Activated T-helper 1 cell treated with anti-CD3 and anti-CD28 coated beads, Interleukin-12 subunit alpha, Interleukin-12 subunit beta, Interleukin-2, Interleukin-4 antibody, amounts not matched to agents 30 ng/mL and 10 ng/mL and 1 ng/mL, durations not matched to agents 14 hours and 24 hours and 36 hours (primary cell): ENCODE measurements at regions of chr2 and their contacts with region 1.

Region 1: DNA sequence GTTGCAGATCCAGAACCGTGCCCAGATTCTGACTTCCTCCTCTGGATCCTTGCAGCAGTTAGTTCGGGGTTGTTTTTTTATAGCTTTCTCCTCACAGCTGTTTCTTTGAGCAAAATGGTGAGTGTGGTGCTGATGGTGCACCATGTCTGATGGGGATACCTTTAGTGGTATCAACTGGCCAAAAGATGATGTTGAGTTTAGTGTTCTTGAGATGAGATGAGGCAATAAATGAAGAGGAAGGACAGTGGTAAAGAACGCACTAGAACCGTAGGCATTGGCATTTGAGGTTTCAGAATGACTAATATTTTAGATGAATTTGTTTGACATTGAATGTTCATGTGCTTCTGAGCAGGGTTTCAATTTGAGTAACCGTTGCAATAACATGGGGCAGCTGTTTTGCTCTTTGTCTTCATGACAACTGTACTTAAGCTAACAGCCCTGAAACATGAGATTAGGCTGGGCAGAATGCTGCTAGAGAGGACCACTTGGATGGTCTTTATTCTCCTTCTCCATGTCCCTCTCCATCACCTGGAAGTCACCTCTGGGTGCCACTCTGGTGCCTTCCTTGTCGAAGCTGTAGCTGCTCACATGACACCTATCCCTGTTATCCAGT is 3.9 kb downstream of the CTLA4 start:
- DNase-seq: peak; percentile 67
- H3K4me3 Mint-ChIP-seq: peak overlapping the region; percentile 95
- H3K27ac Mint-ChIP-seq: peak overlapping the region; percentile 99
- H3K4me1 Mint-ChIP-seq: peaks cover 82% of the 10 kb centered on the region
- H3K27me3 Mint-ChIP-seq: no peaks in the 10 kb centered on the region

Region 2: DNA sequence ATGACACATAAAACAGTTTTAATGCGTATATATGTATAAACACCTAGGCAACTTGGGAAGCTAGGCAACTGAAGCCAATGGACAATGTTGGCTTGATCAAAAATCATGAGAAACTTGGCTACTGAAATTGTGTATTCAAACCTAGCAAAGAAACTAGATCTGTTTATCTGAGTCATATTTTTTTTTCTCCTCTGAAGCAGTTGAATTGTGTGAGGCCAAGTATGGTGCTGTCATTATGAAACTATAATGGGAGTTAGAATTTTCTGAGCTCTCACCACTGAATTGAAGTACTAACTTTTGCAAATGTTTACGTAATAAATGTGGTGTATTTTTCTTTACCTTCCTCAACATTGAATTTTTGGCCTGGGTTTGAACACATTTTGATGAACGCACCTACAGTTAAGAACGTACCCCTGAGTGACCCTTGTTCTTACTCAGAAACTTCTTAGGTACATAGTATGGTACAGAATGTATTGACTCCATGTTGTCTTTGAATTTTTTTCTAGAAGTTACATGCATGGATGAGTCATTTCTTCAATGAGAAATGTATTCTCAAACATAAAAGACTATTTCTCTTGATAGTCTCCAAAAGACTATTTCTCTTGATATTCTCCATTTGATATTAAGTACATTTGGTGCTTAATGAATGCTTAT is 141.3 kb before region 1 on chr2:
- intact Hi-C with region 1: loop called (anchors 1 kb)
- DNase-seq: no peak
- H3K4me3 Mint-ChIP-seq: peak overlapping the region; percentile 32
- H3K27ac Mint-ChIP-seq: peak overlapping the region; percentile 97
- H3K4me1 Mint-ChIP-seq: peaks cover 92% of the 10 kb centered on the region
- H3K27me3 Mint-ChIP-seq: no peaks in the 10 kb centered on the region

Region 3: DNA sequence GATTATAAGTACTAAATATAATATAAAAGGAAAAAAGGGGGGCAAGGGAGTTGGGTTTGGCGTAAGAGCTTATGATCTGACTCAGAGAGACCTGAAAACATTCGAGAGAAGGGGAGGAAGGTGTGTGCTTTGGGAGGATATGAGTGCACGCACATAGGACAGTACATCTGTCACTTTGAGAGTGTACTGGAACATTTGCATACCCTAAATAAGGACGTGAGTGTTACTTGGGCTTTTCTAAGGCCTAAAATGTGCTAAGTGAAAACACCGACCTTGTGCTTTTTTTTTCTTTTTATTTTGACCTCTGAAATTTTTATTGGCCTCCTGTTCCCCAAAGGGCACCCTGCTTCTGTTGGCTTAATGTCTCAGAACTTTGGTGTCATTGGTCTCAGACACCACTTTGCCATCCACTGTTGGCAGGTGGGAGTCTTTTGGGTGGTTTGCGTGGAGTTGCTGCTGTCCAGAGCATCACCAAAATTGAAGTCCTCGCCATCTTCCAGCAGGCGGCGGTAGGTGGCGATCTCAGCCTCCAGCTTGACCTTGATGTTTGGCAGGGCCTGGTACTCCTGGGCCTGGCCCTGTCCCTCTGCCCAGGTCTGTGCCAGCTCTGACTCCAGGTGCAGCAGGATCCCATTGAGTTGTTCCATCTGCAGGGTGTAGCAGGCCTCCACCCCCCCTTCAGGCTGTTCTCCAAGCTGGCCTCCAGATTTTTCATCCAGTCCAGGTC is 107.4 kb before region 1 on chr2:
- intact Hi-C with region 1: loop called (anchors 1 kb)
- DNase-seq: peak; percentile 20
- H3K4me3 Mint-ChIP-seq: peak overlapping the region; percentile 22
- H3K27ac Mint-ChIP-seq: peak overlapping the region; percentile 95
- H3K4me1 Mint-ChIP-seq: peaks cover 66% of the 10 kb centered on the region
- H3K27me3 Mint-ChIP-seq: no peaks in the 10 kb centered on the region

Region 4: GRCh38 chr2:203830304-203831055 is 41.0 kb before region 1 on chr2:
- intact Hi-C with region 1: loop called (anchors 1 kb)
- DNase-seq: peak; percentile 32
- H3K4me3 Mint-ChIP-seq: peak overlapping the region; percentile 27
- H3K27ac Mint-ChIP-seq: peak overlapping the region; percentile 87
- H3K4me1 Mint-ChIP-seq: peaks cover 31% of the 10 kb centered on the region
- H3K27me3 Mint-ChIP-seq: no peaks in the 10 kb centered on the region

Region 5: GRCh38 chr2:203887677-203888076 is 16.2 kb after region 1 on chr2:
- intact Hi-C with region 1: loop called (anchors 1 kb)
- DNase-seq: no peak
- H3K4me3 Mint-ChIP-seq: no peak overlapping the region
- H3K27ac Mint-ChIP-seq: peak overlapping the region; percentile 27
- H3K4me1 Mint-ChIP-seq: peaks cover 74% of the 10 kb centered on the region
- H3K27me3 Mint-ChIP-seq: no peaks in the 10 kb centered on the region

Region 6: DNA sequence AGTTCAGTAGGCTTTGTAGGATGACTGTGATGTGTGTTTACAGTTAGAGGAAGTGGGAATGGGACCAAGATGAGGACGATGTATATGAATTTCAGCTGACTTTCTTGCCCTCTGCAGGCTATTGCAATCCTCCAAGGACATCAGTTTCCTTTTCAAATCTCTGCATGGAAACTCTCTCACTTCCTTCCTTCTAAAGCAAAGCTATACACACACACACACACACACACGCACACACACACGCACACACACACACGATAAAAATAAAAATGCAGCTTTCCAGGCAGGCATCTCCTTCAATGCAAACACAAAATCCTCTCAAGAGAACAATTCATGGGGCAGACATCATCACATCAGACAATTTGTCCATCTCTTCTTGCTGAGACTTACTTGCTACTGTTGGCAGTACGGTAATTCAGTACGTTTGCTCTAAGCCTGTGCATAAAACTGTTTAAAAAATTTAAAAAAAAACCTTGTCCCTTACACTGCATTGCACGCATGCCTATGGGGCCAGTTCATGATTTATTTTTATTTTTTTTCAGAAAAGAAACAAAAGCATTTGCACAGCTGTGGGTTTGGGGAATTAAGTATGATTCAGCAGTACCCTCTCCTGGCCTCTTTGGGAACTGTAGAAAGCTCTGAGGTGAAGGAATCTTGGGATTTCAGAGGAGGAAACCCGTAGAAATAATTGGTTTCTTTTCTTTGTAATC is 37.9 kb after region 1 on chr2:
- intact Hi-C with region 1: loop called (anchors 1 kb)
- DNase-seq: no peak
- H3K4me3 Mint-ChIP-seq: peak overlapping the region; percentile 41
- H3K27ac Mint-ChIP-seq: peak overlapping the region; percentile 62
- H3K4me1 Mint-ChIP-seq: peaks cover 25% of the 10 kb centered on the region
- H3K27me3 Mint-ChIP-seq: peaks cover 2% of the 10 kb centered on the region

Region 7: GRCh38 chr2:203989521-203989920 is 118.0 kb after region 1 on chr2:
- intact Hi-C with region 1: loop called (anchors 1 kb)
- DNase-seq: no peak
- H3K4me3 Mint-ChIP-seq: peak overlapping the region; percentile 3
- H3K27ac Mint-ChIP-seq: peak overlapping the region; percentile 78
- H3K4me1 Mint-ChIP-seq: peaks cover 37% of the 10 kb centered on the region
- H3K27me3 Mint-ChIP-seq: no peaks in the 10 kb centered on the region